ENCODE measurements at regions of chr2 and their contacts with region 1.

Region 1: GRCh38 chr2:216519154-216519762 is 20.6 kb downstream of the RPL37A start:
- DNase-seq: peak; percentile 82
- ATAC-seq: peak; percentile 84
- H3K4me3 ChIP-seq: no peak overlapping the region
- H3K27ac ChIP-seq: no peak overlapping the region
- H3K4me1 ChIP-seq: peaks cover 28% of the 10 kb centered on the region
- H3K27me3 ChIP-seq: no peaks in the 10 kb centered on the region
- CTCF ChIP-seq: peak; percentile 92
- EP300 ChIP-seq: no peak
- POLR2A ChIP-seq: no peak
- RAD21 ChIP-seq: peak; percentile 93

Region 2: DNA sequence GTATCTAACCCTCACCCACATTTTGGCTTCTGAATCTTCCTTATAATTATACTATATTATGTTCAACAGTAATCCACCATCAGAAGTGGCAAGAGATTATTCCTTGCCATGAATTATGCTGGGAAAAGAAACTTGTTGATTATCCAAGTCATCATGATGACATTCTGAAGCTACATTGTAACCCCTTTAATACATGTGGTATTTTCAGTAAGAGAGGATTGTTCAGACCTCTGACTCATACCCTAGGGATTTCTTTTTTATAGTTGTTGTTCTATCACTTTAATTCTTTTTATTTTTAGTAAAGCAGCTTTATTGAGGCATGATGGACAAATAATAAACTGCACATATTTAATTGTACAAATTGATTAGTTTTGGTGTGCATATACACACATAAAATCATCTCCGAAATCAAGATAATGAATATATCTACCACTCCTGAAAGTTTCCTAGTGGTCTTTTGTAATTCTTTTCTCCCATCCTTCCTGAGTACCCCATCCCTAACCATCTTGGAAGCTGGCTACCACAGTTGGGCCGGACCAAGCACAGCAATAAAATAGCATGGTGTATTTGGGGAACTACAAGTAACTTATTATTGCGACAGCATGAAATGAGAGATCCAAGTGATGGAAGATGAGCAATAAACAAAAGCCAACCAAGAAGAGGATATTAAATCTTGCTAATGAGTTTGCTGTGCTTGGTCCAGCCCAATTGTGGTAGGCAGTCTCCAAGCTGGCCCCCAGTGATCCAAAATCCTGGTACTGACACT is 1869.6 kb before region 1 on chr2:
- CTCF ChIA-PET with region 1: no interaction called
- POLR2A ChIA-PET with region 1: no interaction called
- in situ Hi-C with region 1: no loop called
- intact Hi-C with region 1: no loop called
- DNase-seq: no peak
- ATAC-seq: no peak
- H3K4me3 ChIP-seq: no peak overlapping the region
- H3K27ac ChIP-seq: no peak overlapping the region
- H3K4me1 ChIP-seq: no peaks in the 10 kb centered on the region
- H3K27me3 ChIP-seq: no peaks in the 10 kb centered on the region
- CTCF ChIP-seq: no peak
- EP300 ChIP-seq: no peak
- POLR2A ChIP-seq: no peak
- RAD21 ChIP-seq: no peak

Region 3: DNA sequence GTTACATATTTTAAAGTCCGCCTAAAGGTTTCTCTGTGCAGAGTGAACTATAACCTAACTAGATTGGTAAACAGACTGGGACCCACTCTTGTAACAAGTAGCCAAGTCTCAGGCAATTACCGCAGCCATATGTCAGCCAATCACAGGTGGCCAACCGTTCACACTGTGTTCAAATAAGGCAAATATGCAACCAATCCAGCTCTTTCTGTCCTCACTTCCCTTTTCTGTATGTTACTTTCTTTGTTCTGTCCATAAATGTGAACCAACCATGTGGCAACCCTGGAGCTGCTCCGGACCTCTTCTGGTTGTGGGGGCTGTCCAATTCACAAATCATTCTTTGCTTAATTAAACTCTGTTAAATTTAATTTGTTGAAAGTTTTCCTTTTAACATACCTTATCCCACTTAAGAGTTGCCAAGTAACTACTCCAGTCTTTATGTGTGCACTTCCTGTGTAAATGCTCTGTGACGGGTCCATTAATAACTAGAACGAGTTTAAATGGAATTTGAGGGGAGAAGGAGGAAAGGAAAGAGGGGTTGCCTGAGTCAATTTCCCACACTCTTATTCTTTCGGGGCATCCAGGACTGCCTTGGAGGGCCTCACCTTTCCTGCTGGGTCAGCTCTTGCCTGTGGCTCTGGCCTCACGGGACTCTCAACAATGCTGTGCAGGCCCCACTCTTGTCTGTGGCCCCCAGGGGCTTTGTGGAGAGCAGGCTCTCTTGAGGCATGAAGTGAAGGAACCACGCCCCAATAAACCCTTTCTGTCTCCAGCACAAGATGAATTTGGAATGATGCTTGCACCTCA is 27.3 kb before region 1 on chr2:
- CTCF ChIA-PET with region 1: no interaction called
- POLR2A ChIA-PET with region 1: no interaction called
- in situ Hi-C with region 1: no loop called
- intact Hi-C with region 1: no loop called
- DNase-seq: peak; percentile 66
- ATAC-seq: peak; percentile 92
- H3K4me3 ChIP-seq: no peak overlapping the region
- H3K27ac ChIP-seq: no peak overlapping the region
- H3K4me1 ChIP-seq: peaks cover 20% of the 10 kb centered on the region
- H3K27me3 ChIP-seq: no peaks in the 10 kb centered on the region
- CTCF ChIP-seq: no peak
- EP300 ChIP-seq: no peak
- POLR2A ChIP-seq: no peak
- RAD21 ChIP-seq: no peak

Region 4: GRCh38 chr2:216666461-216667233 is 147.4 kb after region 1 on chr2:
- CTCF ChIA-PET with region 1: interaction called, 257 read pairs
- POLR2A ChIA-PET with region 1: interaction called, 8 read pairs
- in situ Hi-C with region 1: loop called (anchors 5 kb)
- intact Hi-C with region 1: loop called (anchors 1 kb)
- DNase-seq: peak; percentile 64
- ATAC-seq: peak; percentile 77
- H3K4me3 ChIP-seq: no peak overlapping the region
- H3K27ac ChIP-seq: no peak overlapping the region
- H3K4me1 ChIP-seq: 0 out of 2 replicates have a peak, but pooled peaks cover 18% of the 10 kb centered on the region
- H3K27me3 ChIP-seq: peaks cover 7 to 35% of the 10 kb centered on the region in 2 experiments; a peak in 4 of 5 replicates
- CTCF ChIP-seq: peak; percentile 98
- EP300 ChIP-seq: no peak
- POLR2A ChIP-seq: no peak
- RAD21 ChIP-seq: peak; percentile 98

Region 5: GRCh38 chr2:217331523-217332139 is 812.4 kb after region 1 on chr2:
- CTCF ChIA-PET with region 1: no interaction called
- POLR2A ChIA-PET with region 1: no interaction called
- in situ Hi-C with region 1: loop called (anchors 25 kb)
- intact Hi-C with region 1: no loop called
- DNase-seq: peak; percentile 99
- ATAC-seq: peak; percentile 98
- H3K4me3 ChIP-seq: peak overlapping the region in 1 of 3 experiments; percentile 24; a peak in 1 of 6 replicates
- H3K27ac ChIP-seq: peak overlapping the region; percentile 85
- H3K4me1 ChIP-seq: peaks cover 58% of the 10 kb centered on the region
- H3K27me3 ChIP-seq: no peaks in the 10 kb centered on the region
- CTCF ChIP-seq: no peak
- EP300 ChIP-seq: peak in 1 of 2 experiments; percentile 93; a peak in 2 of 4 replicates
- POLR2A ChIP-seq: peak in 1 of 2 experiments; percentile 50; a peak in 1 of 4 replicates
- RAD21 ChIP-seq: no peak

Measured in HepG2 (cell line).